K562 (cell line): ENCODE measurements at regions of chr11 and their contacts with region 1.

Region 1: GRCh38 chr11:83193315-83194280 is at the start of gene ANKRD42:
- DNase-seq: peak; percentile 85 to 97 (median 88)
- ATAC-seq: peak; percentile 86
- H3K4me3 ChIP-seq: peak within 1 kb of the TSS; percentile 82
- H3K27ac ChIP-seq: peak within 1 kb of the TSS; percentile 92
- H3K4me1 ChIP-seq: peaks cover 8 to 10% of the 10 kb centered on the region in 2 experiments; a peak in 3 of 5 replicates
- H3K27me3 ChIP-seq: no peaks in the 10 kb centered on the region
- CTCF ChIP-seq: no peak
- EP300 ChIP-seq: no peak
- POLR2A ChIP-seq: peak; percentile 89
- RAD21 ChIP-seq: no peak
- polyA plus RNA-seq, gene ANKRD42: 2.8 to 5.5 TPM

Region 2: GRCh38 chr11:82842019-82842418 is 351.6 kb before region 1 on chr11:
- CTCF ChIA-PET with region 1: no interaction called
- POLR2A ChIA-PET with region 1: no interaction called
- in situ Hi-C with region 1: no loop called
- intact Hi-C with region 1: no loop called
- DNase-seq: no peak
- ATAC-seq: no peak
- H3K4me3 ChIP-seq: no peak overlapping the region
- H3K27ac ChIP-seq: no peak overlapping the region
- H3K4me1 ChIP-seq: peaks cover 0 to 2% of the 10 kb centered on the region in 2 experiments; a peak in 1 of 5 replicates
- H3K27me3 ChIP-seq: no peaks in the 10 kb centered on the region
- CTCF ChIP-seq: no peak
- EP300 ChIP-seq: no peak
- POLR2A ChIP-seq: no peak
- RAD21 ChIP-seq: no peak

Region 3: DNA sequence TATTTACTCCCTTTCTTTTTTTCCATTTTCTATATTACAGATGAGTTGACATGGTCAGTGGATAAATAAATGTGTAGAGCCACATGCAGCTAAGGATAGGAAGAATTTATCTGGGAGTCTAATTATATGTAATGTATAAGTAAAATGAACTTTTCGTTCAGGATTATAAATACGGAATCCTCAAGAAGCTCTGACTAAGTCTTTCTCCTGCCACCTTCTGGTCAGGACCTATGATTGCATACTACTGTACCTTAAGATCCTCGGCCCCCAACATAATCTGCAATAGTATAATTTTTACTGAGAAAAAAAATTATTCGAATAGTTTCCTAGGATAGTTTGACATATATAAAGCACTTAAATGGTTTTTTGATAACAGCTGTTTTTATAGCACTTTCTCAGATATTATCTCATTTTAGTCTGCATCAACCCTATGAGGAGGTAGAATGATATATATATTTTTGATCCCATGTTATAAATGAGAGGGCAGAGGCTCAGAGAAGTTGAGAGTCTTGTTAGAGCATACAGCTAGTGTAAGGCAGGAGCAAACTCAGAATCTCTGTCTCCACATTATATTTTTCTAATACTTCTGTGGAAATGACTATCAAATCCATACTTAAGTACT is 56.5 kb after region 1 on chr11:
- CTCF ChIA-PET with region 1: no interaction called
- POLR2A ChIA-PET with region 1: no interaction called
- in situ Hi-C with region 1: no loop called
- intact Hi-C with region 1: loop called (anchors 5 kb)
- DNase-seq: peak; percentile 47 to 61 (median 50)
- ATAC-seq: peak; percentile 92
- H3K4me3 ChIP-seq: no peak overlapping the region
- H3K27ac ChIP-seq: no peak overlapping the region
- H3K4me1 ChIP-seq: no peaks in the 10 kb centered on the region
- H3K27me3 ChIP-seq: no peaks in the 10 kb centered on the region
- CTCF ChIP-seq: peak; percentile 46 to 77 (median 55); a peak in 5 of 6 replicates
- EP300 ChIP-seq: no peak
- POLR2A ChIP-seq: no peak
- RAD21 ChIP-seq: peak; percentile 73 to 81